ENCODE measurements at regions of chr9 and their contacts with region 1.

Region 1: GRCh38 chr9:97696803-97697601 is at the start of gene XPA:
- DNase-seq: peak; percentile 93 to 96
- ATAC-seq: peak; percentile 93 to 95
- H3K4me3 ChIP-seq: peak within 1 kb of the TSS; percentile 81 to 100 (median 92)
- H3K27ac ChIP-seq: peak within 1 kb of the TSS; percentile 93 to 98 (median 94)
- H3K4me1 ChIP-seq: peaks cover 21 to 38% of the 10 kb centered on the region in 2 donors
- H3K27me3 ChIP-seq: no peaks in the 10 kb centered on the region
- CTCF ChIP-seq: peak in 2 of 5 experiments; percentile 2 to 13
- POLR2A ChIP-seq: peak; percentile 91 to 92
- total RNA-seq, gene XPA: 4.8 to 14.8 (median 9.7) TPM

Region 2: GRCh38 chr9:97468658-97469448 is 228.1 kb before region 1 on chr9:
- in situ Hi-C with region 1: no loop called
- intact Hi-C with region 1: loop called (anchors 5 kb)
- DNase-seq: peak; percentile 76 to 89
- ATAC-seq: peak; percentile 99 to 100
- H3K4me3 ChIP-seq: no peak overlapping the region
- H3K27ac ChIP-seq: peak overlapping the region; percentile 75 to 84 (median 79)
- H3K4me1 ChIP-seq: peaks cover 7 to 17% of the 10 kb centered on the region in 2 donors
- H3K27me3 ChIP-seq: no peaks in the 10 kb centered on the region
- CTCF ChIP-seq: peak; percentile 88 to 93 (median 90)
- POLR2A ChIP-seq: no peak

Region 3: DNA sequence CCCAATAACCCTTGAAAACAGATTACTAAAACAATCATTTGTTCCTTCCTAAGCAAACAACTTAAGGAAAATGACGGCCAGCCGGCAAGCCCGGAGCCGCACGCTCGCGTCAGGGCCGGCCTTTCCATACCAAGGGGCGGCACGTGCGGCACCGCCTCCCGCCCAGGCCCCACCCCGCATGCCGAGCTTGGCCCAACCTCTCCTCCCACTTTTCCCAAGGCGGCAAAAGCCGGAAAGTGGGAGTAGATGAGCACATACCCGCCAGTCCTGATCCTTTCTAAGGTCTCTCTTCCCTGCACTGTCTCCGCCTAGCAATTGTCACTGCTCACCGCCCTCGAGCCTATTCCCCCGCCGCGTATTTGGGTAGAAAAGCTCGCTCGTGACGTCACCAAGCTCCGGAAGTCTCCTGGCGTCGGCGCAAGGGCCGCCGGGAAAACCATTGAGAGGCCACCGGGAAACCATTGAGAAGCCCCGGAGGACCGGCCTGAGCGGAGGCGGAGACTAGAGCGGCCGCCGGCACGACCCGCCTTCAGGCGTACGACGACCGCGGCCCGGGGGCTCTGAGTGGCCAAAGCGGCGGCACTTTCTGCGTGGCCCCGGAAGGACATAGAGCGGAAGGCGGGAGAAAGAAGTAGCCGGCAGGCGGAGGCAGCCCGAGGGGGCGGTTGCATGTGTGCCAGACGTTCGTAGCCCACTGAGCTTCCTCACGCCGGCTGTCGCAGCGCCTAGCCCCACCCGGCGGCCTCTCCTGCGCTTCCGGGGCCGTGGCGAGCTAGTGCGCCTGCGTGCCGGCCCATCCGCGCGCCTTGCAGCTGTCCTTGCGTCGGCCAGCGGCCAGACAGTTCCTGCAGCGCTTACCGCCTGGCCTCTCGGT is 63.8 kb before region 1 on chr9 and contains the starts of genes NCBP1 and TSTD2:
- in situ Hi-C with region 1: no loop called
- intact Hi-C with region 1: loop called (anchors 2 kb)
- DNase-seq: peak; percentile 96 to 98
- ATAC-seq: peak; percentile 87 to 88
- H3K4me3 ChIP-seq: peak within 1 kb of the TSS; percentile 86 to 92 (median 88)
- H3K27ac ChIP-seq: peak within 1 kb of the TSS; percentile 91 to 99 (median 98)
- H3K4me1 ChIP-seq: peaks cover 53 to 56% of the 10 kb centered on the region in 2 donors
- H3K27me3 ChIP-seq: no peaks in the 10 kb centered on the region
- CTCF ChIP-seq: peak in 1 of 5 experiments; percentile 8
- POLR2A ChIP-seq: peak; percentile 83 to 87
- total RNA-seq, gene NCBP1: 8.2 to 17.2 (median 15.7) TPM
- total RNA-seq, gene TSTD2: 11.6 to 19.9 (median 14.5) TPM

Region 4: GRCh38 chr9:98010445-98010844 is 313.4 kb after region 1 on chr9:
- in situ Hi-C with region 1: loop called in 1 of 4 experiments (anchors 25 kb)
- intact Hi-C with region 1: no loop called
- DNase-seq: peak; percentile 45 to 70
- ATAC-seq: peak; percentile 88 to 96
- H3K4me3 ChIP-seq: no peak overlapping the region
- H3K27ac ChIP-seq: peak overlapping the region; percentile 27 to 53 (median 42)
- H3K4me1 ChIP-seq: peaks cover 8 to 25% of the 10 kb centered on the region in 2 donors
- H3K27me3 ChIP-seq: no peaks in the 10 kb centered on the region
- CTCF ChIP-seq: no peak
- POLR2A ChIP-seq: no peak

Region 5: DNA sequence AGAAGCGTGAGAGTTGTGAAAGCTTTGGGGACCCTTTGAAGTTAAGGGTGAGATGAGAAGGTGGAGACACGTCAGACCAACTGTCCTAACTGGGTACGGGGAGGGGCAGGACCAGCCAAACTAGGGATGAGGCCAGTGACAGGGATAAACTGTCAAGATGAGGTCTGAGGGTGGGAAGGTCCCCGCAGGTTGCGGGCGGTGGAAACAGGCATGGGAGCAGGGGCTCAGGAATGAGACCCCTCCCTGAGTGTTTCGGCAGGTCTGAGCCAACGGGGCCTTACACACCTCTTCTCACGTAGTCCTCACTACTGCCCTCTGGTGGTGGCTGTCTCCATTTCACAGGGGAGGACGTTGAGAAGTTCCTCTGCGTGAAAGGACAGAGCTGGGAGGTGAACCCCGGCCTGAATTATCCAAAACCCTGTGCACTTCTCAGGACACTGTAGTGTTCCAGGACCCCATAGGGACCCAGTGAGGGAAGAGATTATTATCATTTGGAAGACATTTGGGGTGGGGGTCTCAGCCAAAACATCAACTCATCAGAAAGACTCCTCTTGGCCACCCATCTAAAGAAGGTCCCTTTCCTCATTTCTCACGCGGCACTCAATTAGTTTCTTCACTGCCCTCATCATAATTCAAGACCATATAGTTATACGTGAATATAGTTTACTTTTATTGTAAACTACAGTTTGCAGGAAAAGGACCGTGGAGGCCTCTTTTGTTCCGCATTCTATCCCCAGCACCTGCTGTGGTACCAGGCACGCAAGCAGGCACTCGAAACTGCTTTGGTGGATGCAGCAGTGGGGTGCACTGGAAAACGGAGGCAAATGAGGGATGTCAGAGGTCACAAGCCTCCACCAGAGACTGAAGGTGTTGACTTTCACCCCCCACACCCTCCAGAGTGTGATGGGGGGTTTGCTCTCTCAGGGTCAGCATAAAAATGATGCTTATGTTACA is 337.9 kb after region 1 on chr9:
- in situ Hi-C with region 1: no loop called
- intact Hi-C with region 1: loop called (anchors 10 kb)
- DNase-seq: peak; percentile 69 to 82
- ATAC-seq: peak; percentile 45 to 61
- H3K4me3 ChIP-seq: peak overlapping the region in 1 of 4 donors; percentile 26
- H3K27ac ChIP-seq: peak overlapping the region; percentile 75 to 80 (median 80)
- H3K4me1 ChIP-seq: peaks cover 36 to 39% of the 10 kb centered on the region in 2 donors
- H3K27me3 ChIP-seq: no peaks in the 10 kb centered on the region
- CTCF ChIP-seq: peak; percentile 78 to 83 (median 81)
- POLR2A ChIP-seq: no peak